Heart left ventricle (tissue), 16 donors: ENCODE measurements at regions of chr15 and their contacts with region 1.

Region 1: DNA sequence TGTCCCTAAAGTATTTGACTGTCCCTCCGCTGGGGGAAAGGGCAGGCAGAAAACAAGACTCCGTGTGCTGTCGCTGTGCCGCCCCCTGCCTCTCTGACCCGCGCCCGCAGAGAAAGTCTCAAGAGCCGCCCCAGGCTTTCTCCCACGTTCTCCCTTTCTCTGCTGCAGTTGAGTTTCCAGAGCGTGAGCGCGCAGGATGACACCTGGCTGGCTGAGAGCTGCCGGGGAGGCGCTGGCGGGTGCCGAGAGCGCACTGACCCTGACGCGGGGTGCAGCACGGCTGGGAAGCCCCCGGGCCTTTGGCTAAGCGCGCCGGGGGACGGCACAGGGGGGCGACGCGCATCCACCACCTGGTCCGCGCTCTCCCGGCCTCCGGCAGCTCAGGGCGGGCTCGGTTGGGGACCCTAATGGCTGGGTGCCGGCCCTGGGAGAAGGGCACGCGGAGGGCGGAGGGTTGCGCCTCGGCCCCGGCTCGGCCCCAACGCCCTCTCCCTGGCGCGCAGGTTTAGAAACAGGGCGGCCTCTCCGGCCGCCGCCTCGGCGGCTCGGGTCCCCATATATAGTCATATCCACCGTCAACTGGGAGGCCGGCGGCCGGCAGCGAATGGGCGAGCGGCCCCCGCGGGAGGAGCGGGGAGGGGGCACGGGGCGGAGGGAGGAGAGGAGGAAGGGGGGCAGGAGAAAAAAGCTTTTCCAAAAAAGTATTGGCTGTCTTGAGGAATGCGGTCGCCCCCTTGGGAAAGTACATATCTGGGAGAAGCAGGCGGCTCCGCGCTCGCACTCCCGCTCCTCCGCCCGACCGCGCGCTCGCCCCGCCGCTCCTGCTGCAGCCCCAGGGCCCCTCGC is at the start of gene TPM1:
- DNase-seq: peak; percentile 91 to 95 (median 94)
- ATAC-seq: peak; percentile 49 to 82 (median 76)
- H3K4me3 ChIP-seq: peak within 1 kb of the TSS; percentile 54 to 95 (median 85)
- H3K27ac ChIP-seq: peak within 1 kb of the TSS; percentile 88 to 99 (median 96)
- H3K4me1 ChIP-seq: peaks cover 0 to 38% (median 8%) of the 10 kb centered on the region in 12 donors
- H3K27me3 ChIP-seq: peaks cover 0 to 69% (median 0%) of the 10 kb centered on the region in 9 donors
- CTCF ChIP-seq: peak in 2 of 12 donors; percentile 39 to 42
- POLR2A ChIP-seq: peak in 1 of 2 donors; percentile 98
- total RNA-seq, gene TPM1: 9,722 to 18,689 (median 13,330) TPM

Region 2: GRCh38 chr15:62847900-62848489 is 194.2 kb before region 1 on chr15:
- intact Hi-C with region 1: loop called (anchors 2 to 10 kb)
- DNase-seq: peak; percentile 64 to 84 (median 75)
- ATAC-seq: peak; percentile 35 to 80 (median 73)
- H3K4me3 ChIP-seq: no peak overlapping the region
- H3K27ac ChIP-seq: peak overlapping the region in 3 of 12 donors; percentile 3 to 58 (median 44)
- H3K4me1 ChIP-seq: peaks cover 0 to 48% (median 15%) of the 10 kb centered on the region in 12 donors
- H3K27me3 ChIP-seq: no peaks in the 10 kb centered on the region
- CTCF ChIP-seq: peak; percentile 71 to 84 (median 76)
- POLR2A ChIP-seq: no peak

Region 3: GRCh38 chr15:62896978-62897647 is 145.1 kb before region 1 on chr15:
- intact Hi-C with region 1: loop called in 9 of 10 experiments (anchors 1 to 5 kb)
- DNase-seq: peak; percentile 92 to 95 (median 94)
- ATAC-seq: peak; percentile 72 to 88 (median 85)
- H3K4me3 ChIP-seq: peak overlapping the region in 7 of 12 donors; percentile 6 to 34 (median 20)
- H3K27ac ChIP-seq: peak overlapping the region; percentile 78 to 97 (median 90)
- H3K4me1 ChIP-seq: peaks cover 3 to 73% (median 37%) of the 10 kb centered on the region in 12 donors
- H3K27me3 ChIP-seq: no peaks in the 10 kb centered on the region
- CTCF ChIP-seq: no peak
- POLR2A ChIP-seq: peak in 1 of 2 donors; percentile 17

Region 4: GRCh38 chr15:62940755-62941361 is 101.3 kb before region 1 on chr15:
- intact Hi-C with region 1: loop called in 5 of 10 experiments (anchors 5 to 10 kb)
- DNase-seq: peak; percentile 82 to 92 (median 89)
- ATAC-seq: peak; percentile 88 to 94 (median 94)
- H3K4me3 ChIP-seq: peak overlapping the region in 1 of 12 donors; percentile 3
- H3K27ac ChIP-seq: peak overlapping the region; percentile 72 to 90 (median 85)
- H3K4me1 ChIP-seq: peaks cover 0 to 33% (median 25%) of the 10 kb centered on the region in 12 donors
- H3K27me3 ChIP-seq: no peaks in the 10 kb centered on the region
- CTCF ChIP-seq: no peak
- POLR2A ChIP-seq: no peak

Region 5: DNA sequence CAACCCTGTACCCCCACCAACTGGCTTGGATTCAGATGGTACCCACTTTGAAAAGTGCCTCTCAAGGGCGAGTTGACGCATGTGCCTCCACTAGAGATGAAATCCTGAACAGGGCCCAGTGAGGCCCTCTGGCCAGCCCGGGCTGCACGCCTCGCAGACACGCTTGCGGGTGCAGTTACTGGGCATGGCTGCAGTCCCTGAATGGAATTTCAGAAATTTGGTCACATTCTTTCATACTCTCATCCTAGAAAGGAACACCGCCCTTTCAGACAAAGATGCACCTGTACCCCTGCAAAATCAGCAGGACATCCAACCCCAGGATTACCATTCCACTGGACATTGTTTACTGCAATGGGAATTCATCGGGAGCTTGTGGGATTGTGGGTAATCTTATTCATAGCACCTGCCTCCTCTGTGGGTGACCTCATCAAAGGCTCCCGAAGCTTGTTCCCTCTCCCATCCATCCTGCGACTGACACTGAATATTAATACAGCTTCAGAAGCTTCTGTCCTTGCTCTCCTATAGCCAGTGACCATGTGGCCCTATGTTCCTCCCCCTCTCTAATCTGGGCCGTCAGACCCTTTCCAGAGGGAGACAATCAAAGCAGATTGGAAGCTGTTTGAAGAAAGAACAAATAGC is 42.2 kb before region 1 on chr15:
- intact Hi-C with region 1: loop called in 6 of 10 experiments (anchors 1 to 5 kb)
- DNase-seq: peak in 2 of 5 donors; percentile 46 to 63
- ATAC-seq: peak; percentile 70 to 81 (median 76)
- H3K4me3 ChIP-seq: no peak overlapping the region
- H3K27ac ChIP-seq: peak overlapping the region; percentile 50 to 94 (median 74)
- H3K4me1 ChIP-seq: peaks cover 0 to 25% (median 2%) of the 10 kb centered on the region in 12 donors
- H3K27me3 ChIP-seq: no peaks in the 10 kb centered on the region
- CTCF ChIP-seq: no peak
- POLR2A ChIP-seq: no peak

Region 6: DNA sequence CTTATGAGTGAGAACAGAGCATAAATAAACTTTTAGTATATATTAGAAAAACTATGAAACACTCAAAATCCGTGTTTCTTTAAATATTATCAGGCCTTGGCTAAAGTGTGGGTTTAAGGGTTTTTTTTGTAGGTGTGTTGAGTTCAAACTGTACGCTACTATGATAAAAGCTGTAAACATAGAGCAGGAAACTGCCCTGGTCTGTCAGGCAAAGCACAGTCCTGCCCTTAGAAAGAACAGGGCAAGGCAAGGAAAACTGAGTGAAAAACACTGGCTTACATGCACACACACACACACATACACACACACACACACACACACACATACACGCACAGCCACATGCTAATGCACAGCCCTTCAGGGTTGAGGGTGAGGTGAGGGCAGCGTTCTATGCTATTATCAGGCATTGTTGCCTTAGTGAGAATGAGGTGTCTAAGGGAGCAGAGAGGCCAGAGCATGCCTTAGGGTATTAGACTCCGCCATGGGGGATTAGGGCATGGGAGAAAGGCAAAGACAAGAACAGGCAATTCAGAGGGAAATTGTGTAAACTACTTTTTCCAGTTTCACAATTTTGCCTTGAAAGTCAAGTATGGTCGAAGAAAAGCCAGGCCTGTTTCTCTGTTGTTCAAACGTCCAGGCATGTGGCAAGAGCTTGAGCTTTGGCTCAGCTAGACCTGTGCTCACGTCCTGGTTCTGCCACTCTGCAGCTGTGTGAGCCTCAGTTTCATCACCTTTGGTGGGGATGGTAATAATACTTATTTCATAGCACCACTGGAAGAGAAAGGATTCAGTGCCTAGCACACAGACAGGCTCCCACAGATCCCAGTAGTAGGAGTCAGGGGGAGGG is 35.9 kb before region 1 on chr15:
- intact Hi-C with region 1: loop called in 5 of 10 experiments (anchors 2 to 5 kb)
- DNase-seq: no peak
- ATAC-seq: peak; percentile 64 to 74 (median 70)
- H3K4me3 ChIP-seq: no peak overlapping the region
- H3K27ac ChIP-seq: peak overlapping the region in 5 of 12 donors; percentile 14 to 34 (median 29)
- H3K4me1 ChIP-seq: peaks cover 0 to 6% (median 0%) of the 10 kb centered on the region in 12 donors
- H3K27me3 ChIP-seq: no peaks in the 10 kb centered on the region
- CTCF ChIP-seq: no peak
- POLR2A ChIP-seq: no peak